ENCODE measurements at regions of chr14 and their contacts with region 1.

Region 1: GRCh38 chr14:22065347-22065746 is 391.7 kb upstream of the OR4E1 start:
- DNase-seq: no peak
- ATAC-seq: no peak
- H3K4me3 Mint-ChIP-seq: peak overlapping the region; percentile 42
- H3K27ac Mint-ChIP-seq: peak overlapping the region; percentile 69
- H3K4me1 Mint-ChIP-seq: peaks cover 40% of the 10 kb centered on the region
- H3K27me3 Mint-ChIP-seq: no peaks in the 10 kb centered on the region

Region 2: DNA sequence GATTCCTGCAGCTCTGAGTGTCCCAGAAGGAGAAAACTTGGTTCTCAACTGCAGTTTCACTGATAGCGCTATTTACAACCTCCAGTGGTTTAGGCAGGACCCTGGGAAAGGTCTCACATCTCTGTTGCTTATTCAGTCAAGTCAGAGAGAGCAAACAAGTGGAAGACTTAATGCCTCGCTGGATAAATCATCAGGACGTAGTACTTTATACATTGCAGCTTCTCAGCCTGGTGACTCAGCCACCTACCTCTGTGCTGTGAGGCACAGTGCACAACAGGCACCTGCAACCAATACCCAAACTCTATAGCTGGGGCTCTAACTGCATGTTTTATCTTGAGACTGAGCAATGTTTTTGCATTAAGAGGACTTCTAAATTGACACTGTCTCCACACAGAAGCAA is 12.6 kb before region 1 on chr14:
- CTCF ChIA-PET with region 1: interaction called, 50 read pairs
- POLR2A ChIA-PET with region 1: interaction called, 9 read pairs
- DNase-seq: peak; percentile 40
- ATAC-seq: peak; percentile 84
- H3K4me3 Mint-ChIP-seq: peak overlapping the region; percentile 70
- H3K27ac Mint-ChIP-seq: peak overlapping the region; percentile 72
- H3K4me1 Mint-ChIP-seq: peaks cover 57% of the 10 kb centered on the region
- H3K27me3 Mint-ChIP-seq: no peaks in the 10 kb centered on the region

Region 3: GRCh38 chr14:22084393-22085281 is 19.3 kb after region 1 on chr14:
- CTCF ChIA-PET with region 1: interaction called, 11 read pairs
- POLR2A ChIA-PET with region 1: no interaction called
- DNase-seq: peak; percentile 53
- ATAC-seq: peak; percentile 49
- H3K4me3 Mint-ChIP-seq: peak overlapping the region; percentile 45
- H3K27ac Mint-ChIP-seq: peak overlapping the region; percentile 72
- H3K4me1 Mint-ChIP-seq: peaks cover 34% of the 10 kb centered on the region
- H3K27me3 Mint-ChIP-seq: no peaks in the 10 kb centered on the region